CD8-positive, alpha-beta T cell (primary cell): ENCODE measurements at regions of chr14 and their contacts with region 1.

Region 1: DNA sequence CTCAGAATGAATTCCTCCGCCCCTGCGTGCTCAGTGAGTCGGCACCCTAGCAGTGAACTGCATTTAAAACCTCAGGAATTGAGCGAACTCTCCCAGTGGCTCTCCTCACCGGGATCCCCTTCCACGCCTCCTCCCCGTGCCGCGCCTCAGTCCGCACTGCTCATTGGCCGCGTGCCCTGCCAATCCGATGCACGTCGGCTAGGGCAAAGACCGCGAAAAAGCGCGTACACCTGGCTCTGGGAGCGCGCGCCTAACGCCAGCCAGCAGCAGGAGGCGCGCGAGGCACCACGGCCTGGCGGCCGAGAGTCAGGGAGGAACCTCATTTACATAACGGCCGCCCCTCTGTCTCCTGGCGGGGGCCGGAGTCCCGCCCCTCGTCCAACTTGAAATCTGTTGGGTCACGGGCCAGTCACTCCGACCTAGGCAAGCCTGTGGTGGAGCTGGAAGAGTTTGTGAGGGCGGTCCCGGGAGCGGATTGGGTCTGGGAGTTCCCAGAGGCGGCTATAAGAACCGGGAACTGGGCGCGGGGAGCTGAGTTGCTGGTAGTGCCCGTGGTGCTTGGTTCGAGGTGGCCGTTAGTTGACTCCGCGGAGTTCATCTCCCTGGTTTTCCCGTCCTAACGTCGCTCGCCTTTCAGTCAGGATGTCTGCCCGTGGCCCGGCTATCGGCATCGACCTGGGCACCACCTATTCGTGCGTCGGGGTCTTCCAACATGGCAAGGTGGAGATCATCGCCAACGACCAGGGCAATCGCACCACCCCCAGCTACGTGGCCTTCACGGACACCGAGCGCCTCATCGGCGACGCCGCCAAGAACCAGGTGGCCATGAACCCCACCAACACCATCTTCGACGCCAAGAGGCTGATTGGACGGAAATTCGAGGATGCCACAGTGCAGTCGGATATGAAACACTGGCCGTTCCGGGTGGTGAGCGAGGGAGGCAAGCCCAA is at the start of gene HSPA2:
- DNase-seq: peak; percentile 85 to 98 (median 93)
- ATAC-seq: peak; percentile 87
- H3K4me3 ChIP-seq: peak within 1 kb of the TSS; percentile 83 to 90
- H3K4me3 Mint-ChIP-seq: peak within 1 kb of the TSS; percentile 96
- H3K27ac ChIP-seq: peak within 1 kb of the TSS; percentile 42 to 56
- H3K27ac Mint-ChIP-seq: peak within 1 kb of the TSS; percentile 84
- H3K4me1 ChIP-seq: peaks cover 19% of the 10 kb centered on the region
- H3K4me1 Mint-ChIP-seq: peaks cover 26% of the 10 kb centered on the region
- H3K27me3 ChIP-seq: no peaks in the 10 kb centered on the region
- H3K27me3 Mint-ChIP-seq: no peaks in the 10 kb centered on the region
- CTCF ChIP-seq: peak; percentile 63
- total RNA-seq, gene HSPA2: 2.1 to 2.6 TPM

Region 2: GRCh38 chr14:64338616-64339316 is 201.7 kb before region 1 on chr14:
- CTCF ChIA-PET with region 1: interaction called, 3 read pairs
- POLR2A ChIA-PET with region 1: no interaction called
- intact Hi-C with region 1: loop called in 1 of 2 experiments (anchors 10 kb)
- DNase-seq: peak; percentile 54 to 93 (median 85)
- ATAC-seq: peak; percentile 79
- H3K4me3 ChIP-seq: peak overlapping the region; percentile 67 to 87
- H3K4me3 Mint-ChIP-seq: peak overlapping the region; percentile 97
- H3K27ac ChIP-seq: peak overlapping the region; percentile 38 to 58
- H3K27ac Mint-ChIP-seq: peak overlapping the region; percentile 96
- H3K4me1 ChIP-seq: peaks cover 19% of the 10 kb centered on the region
- H3K4me1 Mint-ChIP-seq: peaks cover 26% of the 10 kb centered on the region
- H3K27me3 ChIP-seq: no peaks in the 10 kb centered on the region
- H3K27me3 Mint-ChIP-seq: no peaks in the 10 kb centered on the region
- CTCF ChIP-seq: no peak

Region 3: GRCh38 chr14:64520701-64521100 is 19.8 kb before region 1 on chr14:
- CTCF ChIA-PET with region 1: interaction called, 4 read pairs
- POLR2A ChIA-PET with region 1: interaction called, 4 read pairs
- intact Hi-C with region 1: loop called in 1 of 2 experiments (anchors 2 kb)
- DNase-seq: no peak
- ATAC-seq: no peak
- H3K4me3 ChIP-seq: no peak overlapping the region
- H3K4me3 Mint-ChIP-seq: no peak overlapping the region
- H3K27ac ChIP-seq: no peak overlapping the region
- H3K27ac Mint-ChIP-seq: no peak overlapping the region
- H3K4me1 ChIP-seq: peaks cover 13% of the 10 kb centered on the region
- H3K4me1 Mint-ChIP-seq: peaks cover 39% of the 10 kb centered on the region
- H3K27me3 ChIP-seq: no peaks in the 10 kb centered on the region
- H3K27me3 Mint-ChIP-seq: no peaks in the 10 kb centered on the region
- CTCF ChIP-seq: no peak

Region 4: GRCh38 chr14:64566651-64567122 is 26.2 kb after region 1 on chr14:
- CTCF ChIA-PET with region 1: no interaction called
- POLR2A ChIA-PET with region 1: no interaction called
- intact Hi-C with region 1: no loop called
- DNase-seq: no peak
- ATAC-seq: no peak
- H3K4me3 ChIP-seq: no peak overlapping the region
- H3K4me3 Mint-ChIP-seq: no peak overlapping the region
- H3K27ac ChIP-seq: no peak overlapping the region
- H3K27ac Mint-ChIP-seq: no peak overlapping the region
- H3K4me1 ChIP-seq: no peaks in the 10 kb centered on the region
- H3K4me1 Mint-ChIP-seq: peaks cover under 1% of the 10 kb centered on the region
- H3K27me3 ChIP-seq: no peaks in the 10 kb centered on the region
- H3K27me3 Mint-ChIP-seq: peaks cover 3% of the 10 kb centered on the region
- CTCF ChIP-seq: no peak

Region 5: DNA sequence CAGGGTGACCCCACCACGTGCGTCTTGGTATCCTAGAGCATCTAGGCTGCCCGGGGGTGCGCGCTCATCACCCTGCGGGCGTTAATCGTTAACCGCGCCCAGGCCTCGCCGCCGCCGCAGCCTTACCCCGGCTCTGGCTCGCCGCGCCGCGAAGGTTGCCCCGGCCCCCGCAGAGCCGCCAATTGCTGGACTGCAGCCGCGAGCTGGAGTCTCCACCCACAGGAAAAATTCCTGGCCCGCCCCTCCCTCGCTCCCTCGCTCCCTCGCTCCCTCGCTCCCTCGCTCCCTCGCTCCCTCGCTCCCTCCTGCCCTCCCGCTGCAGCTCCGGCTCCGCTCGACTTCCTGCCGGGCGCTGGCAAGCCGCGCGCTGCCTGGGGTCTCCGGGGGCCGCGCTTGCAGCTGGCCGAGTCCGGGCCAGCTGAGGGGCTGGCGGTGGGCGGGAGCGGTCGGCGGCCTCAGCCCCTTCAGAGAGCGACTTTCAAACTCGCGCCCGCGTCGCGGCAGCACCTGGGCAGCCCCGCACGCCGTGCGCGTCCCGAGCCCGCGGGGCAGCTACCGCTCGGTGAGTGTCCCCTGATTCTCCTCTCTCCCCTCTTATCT is 163.8 kb after region 1 on chr14 and contains the start of gene PLEKHG3:
- CTCF ChIA-PET with region 1: no interaction called
- POLR2A ChIA-PET with region 1: no interaction called
- intact Hi-C with region 1: no loop called
- DNase-seq: peak in 2 of 9 experiments; percentile 61 to 62
- ATAC-seq: peak; percentile 39
- H3K4me3 ChIP-seq: peak within 1 kb of the TSS; percentile 49 to 63
- H3K4me3 Mint-ChIP-seq: peak within 1 kb of the TSS; percentile 79
- H3K27ac ChIP-seq: peak within 1 kb of the TSS in 1 of 2 experiments; percentile 71
- H3K27ac Mint-ChIP-seq: peak within 1 kb of the TSS; percentile 73
- H3K4me1 ChIP-seq: peaks cover 42% of the 10 kb centered on the region
- H3K4me1 Mint-ChIP-seq: peaks cover 47% of the 10 kb centered on the region
- H3K27me3 ChIP-seq: peaks cover 2 to 10% of the 10 kb centered on the region in 2 experiments
- H3K27me3 Mint-ChIP-seq: peaks cover 57% of the 10 kb centered on the region
- CTCF ChIP-seq: no peak
- total RNA-seq, gene PLEKHG3: 2.5 to 2.7 TPM

Region 6: DNA sequence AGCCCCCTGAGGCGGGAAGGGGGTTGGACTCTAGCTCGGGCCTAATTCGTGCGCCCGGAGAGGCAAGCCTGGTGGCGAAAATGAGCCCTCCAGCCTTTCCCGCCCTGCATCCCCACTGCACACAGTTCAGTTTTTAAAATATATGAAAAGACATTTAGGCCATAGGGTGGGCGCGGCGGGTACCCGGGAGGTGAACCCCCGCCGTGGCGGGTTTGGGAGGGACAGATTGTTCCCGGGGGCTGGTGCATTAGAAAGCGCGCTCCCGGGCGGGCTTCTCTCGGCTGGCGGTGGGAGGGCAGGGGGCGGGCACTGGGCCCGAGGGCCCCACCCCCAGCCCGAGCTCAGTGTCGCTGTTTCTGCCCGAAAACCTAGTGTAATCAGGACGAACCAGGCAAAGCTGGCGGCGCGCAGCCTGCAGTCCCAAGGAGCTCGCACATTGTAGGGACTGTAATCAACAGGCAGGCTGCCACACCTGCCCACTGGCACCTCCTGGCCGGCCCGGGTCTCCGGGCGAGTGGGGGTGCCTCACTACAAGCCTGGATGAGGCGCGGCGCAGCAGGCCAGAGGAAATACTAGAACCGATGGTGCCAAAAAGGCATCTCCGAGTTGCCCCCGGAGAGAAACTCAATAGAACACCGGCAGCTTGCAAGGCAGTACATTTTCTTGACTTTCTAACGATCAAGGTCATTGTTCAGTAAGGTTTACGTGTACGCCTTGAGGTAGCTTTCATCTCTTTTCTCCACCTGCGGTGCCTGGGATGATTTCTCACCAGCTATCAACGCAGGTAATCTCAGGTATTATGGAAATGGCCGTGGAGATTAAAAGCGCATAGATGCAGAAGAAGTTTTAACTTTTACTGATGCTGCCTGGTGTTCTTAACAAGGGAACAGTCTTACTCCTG is 340.0 kb after region 1 on chr14:
- CTCF ChIA-PET with region 1: no interaction called
- POLR2A ChIA-PET with region 1: no interaction called
- intact Hi-C with region 1: no loop called
- DNase-seq: peak; percentile 22 to 74 (median 59)
- ATAC-seq: peak; percentile 82
- H3K4me3 ChIP-seq: peak overlapping the region; percentile 51 to 62
- H3K4me3 Mint-ChIP-seq: peak overlapping the region; percentile 87
- H3K27ac ChIP-seq: no peak overlapping the region
- H3K27ac Mint-ChIP-seq: no peak overlapping the region
- H3K4me1 ChIP-seq: no peaks in the 10 kb centered on the region
- H3K4me1 Mint-ChIP-seq: peaks cover 8% of the 10 kb centered on the region
- H3K27me3 ChIP-seq: peaks cover 0 to 17% of the 10 kb centered on the region in 2 experiments
- H3K27me3 Mint-ChIP-seq: peaks cover 16% of the 10 kb centered on the region
- CTCF ChIP-seq: no peak